Motor neuron (in vitro differentiated cells): ENCODE measurements at regions of chr1 and their contacts with region 1.

Region 1: GRCh38 chr1:159229486-159229885 is 24.8 kb downstream of the ACKR1 start:
- ATAC-seq: peak in 4 of 8 experiments; percentile 16 to 90 (median 54)
- H3K4me3 ChIP-seq: no peak overlapping the region
- H3K27ac ChIP-seq: no peak overlapping the region
- H3K4me1 ChIP-seq: no peaks in the 10 kb centered on the region

Region 2: DNA sequence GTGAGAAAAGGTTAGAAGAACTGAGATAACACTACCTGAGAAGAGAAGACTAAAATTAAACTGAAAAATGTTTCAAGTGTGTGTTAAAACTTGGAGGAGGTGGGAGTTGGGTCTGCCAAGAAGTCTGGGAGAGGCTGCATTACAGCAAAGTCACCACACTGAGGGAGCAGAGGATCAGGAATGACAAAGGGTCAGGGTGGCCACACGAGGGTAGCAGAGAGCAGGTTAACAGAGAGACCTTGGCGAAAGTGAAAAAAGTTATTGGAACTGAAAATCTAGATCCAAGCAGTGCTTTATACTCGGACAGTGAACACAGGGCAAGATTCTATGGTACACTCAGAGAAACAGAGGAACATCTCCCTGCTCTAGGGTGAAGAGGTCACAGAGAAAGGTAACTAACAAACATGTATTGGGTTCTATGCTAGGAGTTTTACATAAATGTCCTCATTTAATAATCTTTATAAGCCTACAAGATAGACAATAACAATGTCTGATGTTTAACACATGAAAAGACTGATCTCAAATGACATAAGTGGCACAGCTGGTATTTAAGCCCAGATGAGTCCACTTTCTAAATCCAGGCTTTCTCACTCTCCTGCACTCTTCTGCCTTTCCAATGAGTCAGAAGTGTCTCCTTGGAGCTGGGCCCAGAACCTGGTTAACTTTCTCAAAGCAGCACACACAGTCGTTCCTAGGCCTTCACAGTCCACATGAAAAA is 68.3 kb before region 1 on chr1:
- in situ Hi-C with region 1: loop called in 1 of 9 experiments (anchors 10 kb)
- ATAC-seq: peak; percentile 63 to 99 (median 74)
- H3K4me3 ChIP-seq: no peak overlapping the region
- H3K27ac ChIP-seq: no peak overlapping the region
- H3K4me1 ChIP-seq: peaks cover 21 to 30% of the 10 kb centered on the region in 2 donors

Region 3: GRCh38 chr1:159505676-159506075 is 276.2 kb after region 1 on chr1:
- in situ Hi-C with region 1: no loop called
- ATAC-seq: no peak
- H3K4me3 ChIP-seq: no peak overlapping the region
- H3K27ac ChIP-seq: no peak overlapping the region
- H3K4me1 ChIP-seq: peaks cover 2 to 6% of the 10 kb centered on the region in 2 donors

Region 4: DNA sequence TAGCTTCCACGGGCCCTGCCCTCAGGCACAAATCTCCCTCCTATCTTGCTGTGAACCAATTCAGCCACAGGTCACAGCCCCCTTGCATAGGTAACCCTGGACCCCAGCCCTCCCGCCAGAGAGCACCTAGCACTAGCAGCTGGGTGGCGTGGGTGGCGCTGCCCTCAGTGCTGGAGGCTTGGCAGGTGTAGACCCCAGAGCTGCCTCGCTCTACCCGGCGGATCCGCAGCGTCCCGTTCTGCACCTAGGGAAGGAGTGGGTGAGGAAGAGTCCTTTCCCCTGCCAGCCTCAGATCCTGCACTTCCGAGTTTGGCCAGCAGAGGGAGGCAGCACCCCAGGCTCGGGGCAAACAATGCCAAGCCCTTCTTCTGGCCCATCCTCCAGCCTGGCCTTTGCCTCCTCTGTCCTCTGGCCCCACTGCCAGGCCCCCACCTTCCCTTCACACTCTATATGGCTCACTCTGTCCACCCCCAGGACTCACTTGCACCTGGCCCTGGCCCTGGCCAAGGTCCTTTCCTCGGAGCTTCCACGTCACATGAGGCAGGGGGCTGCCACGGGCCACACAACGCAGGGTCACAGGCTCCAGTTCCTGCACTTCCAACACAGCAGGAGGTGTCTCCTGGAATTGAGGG is 706.9 kb after region 1 on chr1:
- in situ Hi-C with region 1: no loop called
- ATAC-seq: peak; percentile 13 to 86 (median 34)
- H3K4me3 ChIP-seq: no peak overlapping the region
- H3K27ac ChIP-seq: peak overlapping the region in 1 of 2 donors; percentile 67
- H3K4me1 ChIP-seq: peaks cover 28 to 30% of the 10 kb centered on the region in 2 donors